ENCODE measurements at regions of chr1 and their contacts with region 1.

Region 1: GRCh38 chr1:82934074-82934473 is 1064.9 kb downstream of the TTLL7 start:
- DNase-seq: no peak
- ATAC-seq: no peak
- H3K4me3 Mint-ChIP-seq: no peak overlapping the region
- H3K27ac Mint-ChIP-seq: no peak overlapping the region
- H3K4me1 Mint-ChIP-seq: no peaks in the 10 kb centered on the region
- H3K27me3 Mint-ChIP-seq: peaks cover 2% of the 10 kb centered on the region

Region 2: DNA sequence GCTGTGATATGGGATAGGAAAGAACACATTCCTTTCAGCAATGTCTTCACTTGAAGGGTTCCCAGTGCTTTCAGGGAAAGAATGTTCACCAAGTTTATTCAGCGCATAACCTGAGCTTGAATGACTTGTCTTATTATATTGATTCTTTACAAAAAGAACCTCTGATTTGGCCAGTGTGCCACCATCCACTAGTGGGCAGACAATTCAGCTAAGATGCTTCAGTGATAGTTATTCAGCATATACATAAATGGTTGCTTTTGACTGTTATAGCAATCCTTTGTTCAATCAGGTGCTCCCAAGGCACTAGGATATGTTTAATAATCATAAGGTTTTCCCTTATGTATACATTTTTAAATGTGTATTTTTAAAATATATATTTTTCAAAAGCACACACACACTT is 45.0 kb before region 1 on chr1:
- CTCF ChIA-PET with region 1: no interaction called
- POLR2A ChIA-PET with region 1: interaction called, 13 read pairs
- intact Hi-C with region 1: no loop called
- DNase-seq: no peak
- ATAC-seq: no peak
- H3K4me3 Mint-ChIP-seq: no peak overlapping the region
- H3K27ac Mint-ChIP-seq: no peak overlapping the region
- H3K4me1 Mint-ChIP-seq: no peaks in the 10 kb centered on the region
- H3K27me3 Mint-ChIP-seq: no peaks in the 10 kb centered on the region

Region 3: GRCh38 chr1:82947278-82947677 is 13.2 kb after region 1 on chr1:
- CTCF ChIA-PET with region 1: no interaction called
- POLR2A ChIA-PET with region 1: no interaction called
- intact Hi-C with region 1: no loop called
- DNase-seq: no peak
- ATAC-seq: no peak
- H3K4me3 Mint-ChIP-seq: no peak overlapping the region
- H3K27ac Mint-ChIP-seq: no peak overlapping the region
- H3K4me1 Mint-ChIP-seq: no peaks in the 10 kb centered on the region
- H3K27me3 Mint-ChIP-seq: no peaks in the 10 kb centered on the region